MCF 10A (cell line): ENCODE measurements at regions of chr1 and their contacts with region 1.

Region 1: GRCh38 chr1:221435504-221435904 is 306.4 kb downstream of the DUSP10 start:
- DNase-seq: peak; percentile 80
- H3K4me3 Mint-ChIP-seq: no peak overlapping the region
- H3K27ac Mint-ChIP-seq: no peak overlapping the region
- H3K4me1 Mint-ChIP-seq: peaks cover 26% of the 10 kb centered on the region
- H3K27me3 Mint-ChIP-seq: no peaks in the 10 kb centered on the region
- CTCF ChIP-seq: peak; percentile 99

Region 2: DNA sequence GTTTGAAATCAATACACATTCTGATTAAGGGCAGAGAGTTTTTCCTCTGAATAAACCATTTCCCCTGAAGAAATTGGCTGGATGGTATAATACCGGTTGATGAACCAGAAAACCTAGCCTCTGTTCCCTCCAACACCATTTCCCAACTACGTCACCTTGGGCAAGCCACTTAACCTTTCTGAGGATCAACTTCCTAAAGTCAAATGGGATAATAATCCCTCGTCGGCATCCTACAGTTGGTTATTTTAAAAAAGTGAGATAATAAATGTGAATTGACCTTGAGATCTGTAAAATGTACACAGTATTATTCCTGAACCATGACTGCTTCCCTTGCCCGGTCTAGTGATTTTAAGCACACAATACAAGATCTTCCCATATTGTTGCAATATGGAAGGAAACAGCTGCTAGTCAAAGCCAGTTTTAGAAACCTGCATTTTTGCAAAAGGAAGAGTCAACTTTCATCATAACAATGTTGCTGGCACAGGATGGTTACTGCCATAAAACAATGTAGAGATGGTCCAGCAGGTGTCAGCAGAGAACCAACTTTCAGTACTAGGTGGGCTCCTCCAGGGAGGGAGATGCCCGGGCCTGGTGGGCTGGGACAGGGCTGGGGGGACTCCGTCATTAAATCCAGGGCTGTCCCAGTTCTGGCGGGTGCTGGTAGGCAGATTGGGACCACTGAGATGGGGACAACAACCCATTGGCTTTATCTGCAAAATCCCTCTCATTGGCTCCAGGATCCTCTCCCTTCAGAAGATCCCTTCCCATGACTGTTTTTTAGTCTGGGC is 561.4 kb before region 1 on chr1:
- CTCF ChIA-PET with region 1: interaction called, 185 read pairs
- POLR2A ChIA-PET with region 1: interaction called, 7 read pairs
- intact Hi-C with region 1: loop called (anchors 1 kb)
- DNase-seq: peak; percentile 74
- H3K4me3 Mint-ChIP-seq: no peak overlapping the region
- H3K27ac Mint-ChIP-seq: no peak overlapping the region
- H3K4me1 Mint-ChIP-seq: no peaks in the 10 kb centered on the region
- H3K27me3 Mint-ChIP-seq: no peaks in the 10 kb centered on the region
- CTCF ChIP-seq: peak; percentile 99

Region 3: DNA sequence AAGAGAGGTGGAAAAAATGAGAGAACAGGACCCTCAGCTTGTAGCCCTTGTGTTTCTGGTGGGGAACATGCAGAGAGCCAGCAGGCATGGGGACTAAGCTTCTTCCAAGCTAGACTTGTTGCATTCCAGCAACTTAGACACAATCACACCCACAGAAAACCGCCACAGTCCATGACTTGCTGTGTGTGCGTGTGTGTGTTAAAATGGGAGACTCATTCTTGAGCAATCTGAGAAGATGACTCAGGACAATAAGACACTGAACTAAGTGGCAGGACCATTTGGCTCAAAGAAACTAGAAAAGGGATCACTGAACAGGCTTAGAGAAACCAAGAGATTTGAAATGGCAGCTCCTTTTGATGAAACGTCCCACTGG is 478.3 kb before region 1 on chr1:
- CTCF ChIA-PET with region 1: interaction called, 11 read pairs
- POLR2A ChIA-PET with region 1: no interaction called
- intact Hi-C with region 1: loop called (anchors 2 kb)
- DNase-seq: peak; percentile 97
- H3K4me3 Mint-ChIP-seq: peak overlapping the region; percentile 33
- H3K27ac Mint-ChIP-seq: peak overlapping the region; percentile 89
- H3K4me1 Mint-ChIP-seq: peaks cover 21% of the 10 kb centered on the region
- H3K27me3 Mint-ChIP-seq: no peaks in the 10 kb centered on the region
- CTCF ChIP-seq: no peak

Region 4: DNA sequence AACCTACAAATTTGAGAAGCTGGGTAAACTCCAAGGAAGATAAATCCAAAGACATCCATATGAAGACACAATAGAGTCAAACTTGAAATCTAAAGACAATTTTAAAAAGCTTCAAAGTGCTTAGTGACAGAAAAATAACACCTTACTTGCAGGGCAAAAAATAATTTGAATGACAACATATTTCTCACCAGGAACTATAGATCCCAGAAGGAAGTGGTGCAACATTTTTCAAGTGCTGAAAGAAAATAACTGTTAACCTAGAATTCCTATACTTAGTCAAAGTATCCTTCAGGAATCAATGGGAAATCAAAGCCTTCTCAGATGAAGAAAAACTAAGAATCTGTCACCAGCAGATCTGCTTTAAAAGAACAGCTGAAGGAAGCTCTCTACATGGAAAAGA is 371.9 kb before region 1 on chr1:
- CTCF ChIA-PET with region 1: no interaction called
- POLR2A ChIA-PET with region 1: no interaction called
- intact Hi-C with region 1: no loop called
- DNase-seq: no peak
- H3K4me3 Mint-ChIP-seq: no peak overlapping the region
- H3K27ac Mint-ChIP-seq: no peak overlapping the region
- H3K4me1 Mint-ChIP-seq: no peaks in the 10 kb centered on the region
- H3K27me3 Mint-ChIP-seq: no peaks in the 10 kb centered on the region
- CTCF ChIP-seq: no peak

Region 5: GRCh38 chr1:221203224-221204054 is 232.1 kb before region 1 on chr1:
- CTCF ChIA-PET with region 1: interaction called, 56 read pairs
- POLR2A ChIA-PET with region 1: interaction called, 5 read pairs
- intact Hi-C with region 1: loop called (anchors 5 kb)
- DNase-seq: peak; percentile 94
- H3K4me3 Mint-ChIP-seq: no peak overlapping the region
- H3K27ac Mint-ChIP-seq: no peak overlapping the region
- H3K4me1 Mint-ChIP-seq: peaks cover 6% of the 10 kb centered on the region
- H3K27me3 Mint-ChIP-seq: no peaks in the 10 kb centered on the region
- CTCF ChIP-seq: peak; percentile 99

Region 6: GRCh38 chr1:221315330-221315729 is 120.2 kb before region 1 on chr1:
- CTCF ChIA-PET with region 1: interaction called, 11 read pairs
- POLR2A ChIA-PET with region 1: interaction called, 8 read pairs
- intact Hi-C with region 1: no loop called
- DNase-seq: peak; percentile 82
- H3K4me3 Mint-ChIP-seq: peak overlapping the region; percentile 7
- H3K27ac Mint-ChIP-seq: peak overlapping the region; percentile 59
- H3K4me1 Mint-ChIP-seq: peaks cover 29% of the 10 kb centered on the region
- H3K27me3 Mint-ChIP-seq: no peaks in the 10 kb centered on the region
- CTCF ChIP-seq: no peak

Region 7: DNA sequence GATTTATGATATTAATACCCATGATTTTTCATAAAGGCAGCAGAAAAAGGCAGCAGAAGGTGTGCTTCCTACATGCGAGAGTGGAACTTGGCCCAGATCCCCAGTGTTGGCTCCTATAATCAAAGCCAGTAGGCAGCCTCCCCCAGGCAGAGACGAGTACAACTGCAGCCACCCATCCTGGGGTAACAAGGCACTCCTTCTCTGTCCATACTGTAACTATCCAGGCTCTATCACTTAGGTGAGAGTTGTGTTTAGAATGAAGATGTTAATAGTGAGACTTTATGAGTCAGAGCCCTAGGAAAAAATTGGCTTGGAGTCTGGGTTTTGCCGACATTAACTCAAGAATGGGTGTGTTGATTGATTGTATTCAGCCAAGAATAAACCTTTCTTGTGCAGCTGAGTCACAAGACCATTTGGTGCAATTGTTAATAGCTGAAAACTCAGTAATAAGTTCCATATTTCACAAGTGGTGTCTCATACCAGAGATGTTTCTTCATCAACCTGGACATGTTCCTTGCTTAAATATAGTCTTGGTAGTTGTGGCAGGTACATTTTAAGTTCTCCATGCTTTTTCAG is 15.9 kb before region 1 on chr1:
- CTCF ChIA-PET with region 1: interaction called, 28 read pairs
- POLR2A ChIA-PET with region 1: interaction called, 12 read pairs
- intact Hi-C with region 1: no loop called
- DNase-seq: peak; percentile 99
- H3K4me3 Mint-ChIP-seq: no peak overlapping the region
- H3K27ac Mint-ChIP-seq: peak overlapping the region; percentile 87
- H3K4me1 Mint-ChIP-seq: peaks cover 31% of the 10 kb centered on the region
- H3K27me3 Mint-ChIP-seq: no peaks in the 10 kb centered on the region
- CTCF ChIP-seq: no peak